ENCODE measurements at regions of chr4 and their contacts with region 1.

Region 1: DNA sequence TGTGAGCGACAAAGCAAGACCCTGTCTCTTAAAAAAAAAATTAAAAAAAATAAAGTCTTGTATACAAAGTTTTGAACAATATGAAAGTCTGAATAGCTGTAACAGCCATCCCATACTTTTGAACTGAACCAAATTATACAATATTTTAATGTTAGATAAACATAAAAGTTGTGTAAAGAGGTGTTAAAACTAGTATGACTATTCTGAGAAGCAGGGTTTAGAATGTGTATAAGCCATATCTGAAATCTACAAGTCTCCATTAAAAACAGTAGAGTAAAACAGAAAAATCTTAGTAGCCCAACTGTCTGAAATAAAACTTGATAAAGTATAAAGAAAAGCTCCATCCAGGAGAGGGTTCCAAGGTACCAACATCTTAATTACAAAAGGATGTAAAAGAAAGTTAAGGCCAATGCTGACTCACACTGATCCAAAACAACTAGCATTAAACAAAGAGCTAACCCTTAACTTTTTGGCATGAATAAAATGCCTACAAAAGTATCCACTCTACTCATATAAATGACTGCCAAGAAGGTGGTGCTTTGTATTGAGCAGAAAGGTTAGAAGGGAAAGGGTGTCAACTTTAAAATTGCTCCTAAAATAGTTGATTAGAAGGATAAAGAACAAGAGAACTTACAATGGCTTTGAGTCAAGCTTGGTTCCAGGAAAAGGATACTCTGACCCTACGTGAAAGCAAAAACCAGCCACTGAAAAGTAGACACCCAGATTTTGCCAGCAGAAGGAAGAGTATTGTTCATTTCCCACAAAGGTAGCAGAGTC is 18.5 kb downstream of the CNOT6L start:
- DNase-seq: no peak
- ATAC-seq: peak; percentile 23
- H3K4me3 ChIP-seq: peak overlapping the region; percentile 35
- H3K4me3 Mint-ChIP-seq: peak overlapping the region; percentile 43 to 85 (median 79)
- H3K27ac ChIP-seq: peak overlapping the region; percentile 70
- H3K27ac Mint-ChIP-seq: peak overlapping the region; percentile 65 to 91 (median 84)
- H3K4me1 ChIP-seq: peaks cover 51 to 74% of the 10 kb centered on the region in 2 donors
- H3K4me1 Mint-ChIP-seq: peaks cover 47 to 98% (median 77%) of the 10 kb centered on the region in 7 donors
- H3K27me3 ChIP-seq: no peaks in the 10 kb centered on the region
- H3K27me3 Mint-ChIP-seq: no peaks in the 10 kb centered on the region

Region 2: DNA sequence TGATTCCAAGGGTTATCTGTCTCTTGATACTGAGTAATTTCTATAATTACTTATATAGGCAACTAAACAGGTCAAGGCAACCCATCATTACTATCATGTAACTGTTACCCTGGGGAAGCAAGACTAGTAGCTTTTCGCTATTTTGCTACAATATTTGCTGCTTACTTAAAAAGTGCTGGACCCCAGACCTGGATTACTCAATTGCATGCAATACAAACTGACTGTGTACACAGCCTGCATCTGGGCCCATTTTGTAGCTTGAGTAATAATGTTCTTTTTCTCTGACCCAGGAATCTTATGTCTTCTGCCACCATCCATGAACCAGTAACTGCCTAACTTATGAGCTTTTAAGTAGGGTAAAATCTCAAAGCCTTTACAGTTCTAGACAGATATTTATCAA is 35.0 kb before region 1 on chr4:
- CTCF ChIA-PET with region 1: no interaction called
- POLR2A ChIA-PET with region 1: no interaction called
- intact Hi-C with region 1: loop called in 1 of 2 experiments (anchors 5 kb)
- DNase-seq: no peak
- ATAC-seq: no peak
- H3K4me3 ChIP-seq: no peak overlapping the region
- H3K4me3 Mint-ChIP-seq: no peak overlapping the region
- H3K27ac ChIP-seq: no peak overlapping the region
- H3K27ac Mint-ChIP-seq: peak overlapping the region in 5 of 9 donors; percentile 11 to 77 (median 49)
- H3K4me1 ChIP-seq: no peaks in the 10 kb centered on the region
- H3K4me1 Mint-ChIP-seq: peaks cover 7 to 51% (median 42%) of the 10 kb centered on the region in 7 donors
- H3K27me3 ChIP-seq: no peaks in the 10 kb centered on the region
- H3K27me3 Mint-ChIP-seq: no peaks in the 10 kb centered on the region

Region 3: GRCh38 chr4:77785669-77786068 is 15.0 kb before region 1 on chr4:
- CTCF ChIA-PET with region 1: interaction called, 4 read pairs
- POLR2A ChIA-PET with region 1: interaction called, 3 read pairs
- intact Hi-C with region 1: loop called (anchors 2 kb)
- DNase-seq: no peak
- ATAC-seq: no peak
- H3K4me3 ChIP-seq: no peak overlapping the region
- H3K4me3 Mint-ChIP-seq: peak overlapping the region in 9 of 10 donors; percentile 5 to 75 (median 62)
- H3K27ac ChIP-seq: no peak overlapping the region
- H3K27ac Mint-ChIP-seq: peak overlapping the region in 7 of 9 donors; percentile 13 to 80 (median 66)
- H3K4me1 ChIP-seq: peaks cover 32 to 33% of the 10 kb centered on the region in 2 donors
- H3K4me1 Mint-ChIP-seq: peaks cover 44 to 97% (median 84%) of the 10 kb centered on the region in 7 donors
- H3K27me3 ChIP-seq: no peaks in the 10 kb centered on the region
- H3K27me3 Mint-ChIP-seq: no peaks in the 10 kb centered on the region

Region 4: DNA sequence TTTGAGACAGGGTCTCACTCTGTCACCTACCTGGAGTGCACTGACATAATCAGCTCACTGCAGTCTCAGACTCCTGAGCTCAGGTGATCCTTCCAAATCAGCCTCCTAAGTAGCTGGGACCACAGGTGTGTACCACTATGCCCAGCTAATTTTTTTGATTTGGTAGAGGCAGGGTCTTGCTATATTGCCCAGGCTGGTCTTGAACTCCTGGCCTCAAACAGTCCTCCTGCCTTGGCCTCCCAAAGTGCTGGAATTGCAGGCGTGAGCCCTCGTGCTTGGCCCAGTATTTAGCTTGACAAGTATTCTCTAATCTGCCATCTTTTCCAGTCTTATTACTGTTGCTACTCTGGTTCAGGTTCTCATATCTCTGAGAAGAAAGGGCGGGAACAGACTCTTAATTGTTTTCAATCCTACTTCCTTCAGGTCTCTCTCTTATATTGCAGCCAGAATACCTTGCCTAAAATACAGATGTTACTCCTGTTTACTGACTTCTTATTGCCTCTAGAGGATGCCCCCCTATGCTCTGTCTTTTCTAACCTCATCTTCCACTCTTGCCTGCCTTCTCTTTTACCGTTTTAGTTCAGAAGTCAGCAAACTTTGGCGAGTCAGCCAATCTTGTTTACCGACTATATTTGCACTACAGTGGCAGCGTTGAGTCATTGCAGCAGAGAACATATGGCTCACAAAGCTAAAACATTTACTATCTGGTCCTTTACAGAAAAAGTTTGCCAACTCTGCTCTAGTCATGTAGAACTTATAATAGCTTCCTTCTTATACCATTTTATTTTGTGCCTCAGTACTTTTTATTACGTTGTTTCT is 81.0 kb after region 1 on chr4:
- CTCF ChIA-PET with region 1: no interaction called
- POLR2A ChIA-PET with region 1: no interaction called
- intact Hi-C with region 1: no loop called
- DNase-seq: no peak
- ATAC-seq: no peak
- H3K4me3 ChIP-seq: no peak overlapping the region
- H3K4me3 Mint-ChIP-seq: no peak overlapping the region
- H3K27ac ChIP-seq: no peak overlapping the region
- H3K27ac Mint-ChIP-seq: peak overlapping the region in 5 of 9 donors; percentile 12 to 66 (median 41)
- H3K4me1 ChIP-seq: peaks cover 0 to 6% of the 10 kb centered on the region in 2 donors
- H3K4me1 Mint-ChIP-seq: peaks cover 8 to 46% (median 36%) of the 10 kb centered on the region in 7 donors
- H3K27me3 ChIP-seq: no peaks in the 10 kb centered on the region
- H3K27me3 Mint-ChIP-seq: no peaks in the 10 kb centered on the region